Vagina (tissue), 2 donors: ENCODE measurements at regions of chr17 and their contacts with region 1.

Region 1: GRCh38 chr17:68759343-68760132 is 158.4 kb upstream of the FAM20A start:
- DNase-seq: peak in 1 of 2 donors; percentile 96
- H3K4me3 ChIP-seq: peak overlapping the region; percentile 26 to 36
- H3K27ac ChIP-seq: peak overlapping the region; percentile 78
- H3K4me1 ChIP-seq: peaks cover 10% of the 10 kb centered on the region
- H3K27me3 ChIP-seq: no peaks in the 10 kb centered on the region
- CTCF ChIP-seq: peak; percentile 78 to 86 (median 86)
- POLR2A ChIP-seq: no peak

Region 2: GRCh38 chr17:68533887-68534694 is 225.4 kb before region 1 on chr17:
- intact Hi-C with region 1: loop called (anchors 5 kb)
- DNase-seq: no peak
- H3K4me3 ChIP-seq: no peak overlapping the region
- H3K27ac ChIP-seq: no peak overlapping the region
- H3K4me1 ChIP-seq: no peaks in the 10 kb centered on the region
- H3K27me3 ChIP-seq: no peaks in the 10 kb centered on the region
- CTCF ChIP-seq: peak in 1 of 3 experiments; percentile 9
- POLR2A ChIP-seq: no peak

Region 3: DNA sequence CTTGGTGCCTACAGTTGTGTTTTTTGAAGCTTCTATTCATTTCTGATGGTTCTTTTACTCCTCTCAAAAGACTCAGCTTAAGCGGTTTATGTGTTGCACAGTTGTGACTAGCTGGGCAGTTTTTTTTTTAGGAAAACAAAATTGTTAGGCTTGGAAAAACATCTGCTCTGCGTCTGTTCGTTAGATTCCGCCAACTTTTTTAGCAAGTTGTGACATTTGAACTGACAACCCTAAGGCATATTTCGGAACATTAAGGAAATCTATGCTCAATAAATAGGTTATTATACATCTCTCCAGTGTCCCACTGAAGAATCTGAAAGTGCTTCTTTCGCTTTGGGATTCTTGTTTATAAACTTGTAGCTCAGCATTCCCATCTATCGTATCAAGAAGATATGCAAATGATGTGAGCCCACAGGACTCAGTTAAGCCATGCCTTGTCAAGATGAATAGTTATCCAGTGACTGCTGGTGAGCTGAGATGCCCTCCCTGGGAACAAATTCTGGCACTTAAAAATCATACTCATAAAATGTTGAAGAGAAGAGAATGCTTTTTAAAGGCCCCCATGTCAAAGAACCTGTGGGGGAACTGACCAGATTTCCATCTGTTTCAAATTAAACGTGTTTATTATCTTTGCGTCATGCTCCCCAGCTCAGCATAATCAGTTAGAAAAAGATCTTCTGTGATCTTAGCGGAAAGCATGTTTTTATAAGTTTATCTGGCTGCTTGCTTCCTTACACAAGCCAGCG is 49.3 kb before region 1 on chr17:
- intact Hi-C with region 1: no loop called
- DNase-seq: no peak
- H3K4me3 ChIP-seq: peak overlapping the region in 1 of 2 donors; percentile 9
- H3K27ac ChIP-seq: peak overlapping the region; percentile 56
- H3K4me1 ChIP-seq: peaks cover 36% of the 10 kb centered on the region
- H3K27me3 ChIP-seq: no peaks in the 10 kb centered on the region
- CTCF ChIP-seq: no peak
- POLR2A ChIP-seq: no peak

Region 4: GRCh38 chr17:68731465-68731864 is 28.1 kb before region 1 on chr17:
- intact Hi-C with region 1: no loop called
- DNase-seq: no peak
- H3K4me3 ChIP-seq: no peak overlapping the region
- H3K27ac ChIP-seq: no peak overlapping the region
- H3K4me1 ChIP-seq: peaks cover 11% of the 10 kb centered on the region
- H3K27me3 ChIP-seq: no peaks in the 10 kb centered on the region
- CTCF ChIP-seq: no peak
- POLR2A ChIP-seq: no peak